Caco-2 (cell line): ENCODE measurements at regions of chr11 and their contacts with region 1.

Region 1: GRCh38 chr11:116224154-116224888 is 548.5 kb downstream of the BUD13 start:
- DNase-seq: peak; percentile 72 to 82
- H3K4me3 ChIP-seq: no peak overlapping the region
- H3K4me3 Mint-ChIP-seq: no peak overlapping the region
- H3K27ac Mint-ChIP-seq: no peak overlapping the region
- H3K4me1 ChIP-seq: no peaks in the 10 kb centered on the region
- H3K4me1 Mint-ChIP-seq: peaks cover 8% of the 10 kb centered on the region
- H3K27me3 ChIP-seq: no peaks in the 10 kb centered on the region; the same call in 1 of the 2 replicates
- H3K27me3 Mint-ChIP-seq: peaks cover 2% of the 10 kb centered on the region
- CTCF ChIP-seq: peak; percentile 90 to 96

Region 2: DNA sequence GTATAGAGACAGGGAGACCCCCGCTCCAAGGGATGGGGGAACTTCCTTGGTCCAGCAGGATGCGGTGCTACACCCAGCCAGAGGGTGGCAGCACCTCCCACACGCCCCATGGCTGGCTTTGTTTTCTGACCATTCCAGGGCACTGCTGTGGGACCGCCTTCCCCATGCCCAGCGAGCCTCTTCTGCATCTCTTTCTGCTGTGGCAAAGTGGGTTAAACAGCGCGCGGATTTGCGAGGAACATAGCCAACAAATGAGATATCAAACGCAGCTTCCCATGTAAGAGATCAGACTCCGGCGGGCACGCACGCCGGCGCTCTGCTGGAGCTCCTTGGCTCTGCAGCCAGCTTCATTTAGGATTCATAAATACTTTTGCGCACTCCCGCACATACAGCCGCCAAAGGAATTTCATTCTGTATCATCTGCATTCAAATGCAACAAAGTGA is 234.3 kb before region 1 on chr11:
- CTCF ChIA-PET with region 1: no interaction called
- POLR2A ChIA-PET with region 1: no interaction called
- intact Hi-C with region 1: loop called (anchors 2 kb)
- DNase-seq: peak in 1 of 2 experiments; percentile 63
- H3K4me3 ChIP-seq: no peak overlapping the region
- H3K4me3 Mint-ChIP-seq: no peak overlapping the region
- H3K27ac Mint-ChIP-seq: no peak overlapping the region
- H3K4me1 ChIP-seq: no peaks in the 10 kb centered on the region
- H3K4me1 Mint-ChIP-seq: no peaks in the 10 kb centered on the region
- H3K27me3 ChIP-seq: no peaks in the 10 kb centered on the region
- H3K27me3 Mint-ChIP-seq: peaks cover 19% of the 10 kb centered on the region
- CTCF ChIP-seq: peak; percentile 88 to 91

Region 3: DNA sequence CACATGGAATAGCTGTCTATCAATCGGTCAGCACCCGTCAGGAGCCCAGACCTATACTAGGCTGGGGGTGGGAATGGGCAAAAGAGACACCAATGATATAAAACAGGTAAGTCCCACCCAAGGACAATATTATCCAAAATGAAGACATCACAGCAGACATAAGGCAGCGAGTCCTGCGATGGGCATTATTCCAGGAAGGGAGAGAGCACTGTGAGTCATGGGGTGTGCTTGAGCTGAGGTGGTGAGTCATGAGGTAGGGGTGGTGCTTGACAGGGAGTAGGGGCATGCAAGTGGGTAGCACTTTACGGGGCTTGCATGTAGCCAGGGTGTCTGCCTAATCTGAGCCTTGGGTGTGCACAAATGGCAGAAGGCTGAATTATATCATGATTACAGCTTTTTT is 115.1 kb before region 1 on chr11:
- CTCF ChIA-PET with region 1: no interaction called
- POLR2A ChIA-PET with region 1: no interaction called
- intact Hi-C with region 1: no loop called
- DNase-seq: no peak
- H3K4me3 ChIP-seq: no peak overlapping the region
- H3K4me3 Mint-ChIP-seq: no peak overlapping the region
- H3K27ac Mint-ChIP-seq: no peak overlapping the region
- H3K4me1 ChIP-seq: no peaks in the 10 kb centered on the region
- H3K4me1 Mint-ChIP-seq: no peaks in the 10 kb centered on the region
- H3K27me3 ChIP-seq: no peaks in the 10 kb centered on the region; the same call in 1 of the 2 replicates
- H3K27me3 Mint-ChIP-seq: peaks cover 24% of the 10 kb centered on the region
- CTCF ChIP-seq: no peak

Region 4: DNA sequence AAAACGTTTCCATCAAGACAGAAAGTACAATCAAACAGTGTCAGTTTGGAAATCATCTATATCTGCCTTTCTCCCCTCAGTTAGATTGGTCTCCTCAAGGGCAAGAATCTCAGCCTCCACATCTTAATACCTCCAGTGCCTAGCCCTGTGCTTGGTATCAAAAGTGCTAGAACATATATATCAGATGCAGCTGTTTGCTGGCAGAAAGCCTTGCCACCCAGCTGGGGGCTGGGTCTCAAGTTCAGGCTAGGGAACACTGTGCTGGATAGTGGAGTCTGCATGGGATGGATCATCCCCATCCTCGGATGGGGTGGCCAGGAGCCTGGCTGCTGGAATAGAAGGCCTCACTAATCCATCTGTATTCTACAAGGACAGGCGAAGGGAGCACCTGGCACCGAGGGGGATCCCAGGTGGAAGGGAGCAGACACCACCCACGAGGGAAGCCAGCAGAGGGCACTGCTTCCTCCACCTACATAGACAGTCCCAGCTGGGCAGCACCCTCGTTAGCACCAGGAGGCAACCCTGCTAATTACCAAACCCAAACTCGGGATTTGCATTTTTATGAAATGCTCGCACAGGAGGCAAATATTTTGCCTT is 53.7 kb before region 1 on chr11:
- CTCF ChIA-PET with region 1: interaction called, 4 read pairs
- POLR2A ChIA-PET with region 1: no interaction called
- intact Hi-C with region 1: loop called (anchors 1 kb)
- DNase-seq: peak in 1 of 2 experiments; percentile 66
- H3K4me3 ChIP-seq: no peak overlapping the region
- H3K4me3 Mint-ChIP-seq: no peak overlapping the region
- H3K27ac Mint-ChIP-seq: no peak overlapping the region
- H3K4me1 ChIP-seq: peaks cover 12% of the 10 kb centered on the region
- H3K4me1 Mint-ChIP-seq: peaks cover 27% of the 10 kb centered on the region
- H3K27me3 ChIP-seq: no peaks in the 10 kb centered on the region
- H3K27me3 Mint-ChIP-seq: no peaks in the 10 kb centered on the region
- CTCF ChIP-seq: peak; percentile 56 to 82